OCI-LY7 (cell line): ENCODE measurements at regions of chr14 and their contacts with region 1.

Region 1: GRCh38 chr14:83300476-83301064 is 1766.9 kb upstream of the SEL1L start:
- DNase-seq: peak; percentile 51
- H3K4me3 ChIP-seq: no peak overlapping the region
- H3K27ac ChIP-seq: no peak overlapping the region
- H3K4me1 ChIP-seq: peaks cover 10% of the 10 kb centered on the region
- CTCF ChIP-seq: peak; percentile 93

Region 2: GRCh38 chr14:83463500-83464098 is 163.0 kb after region 1 on chr14:
- CTCF ChIA-PET with region 1: interaction called, 4 read pairs
- POLR2A ChIA-PET with region 1: interaction called, 7 read pairs
- intact Hi-C with region 1: loop called (anchors 1 kb)
- DNase-seq: peak; percentile 63
- H3K4me3 ChIP-seq: no peak overlapping the region
- H3K27ac ChIP-seq: no peak overlapping the region
- H3K4me1 ChIP-seq: no peaks in the 10 kb centered on the region
- CTCF ChIP-seq: peak; percentile 93